ENCODE measurements at regions of chr10 and their contacts with region 1.

Region 1: DNA sequence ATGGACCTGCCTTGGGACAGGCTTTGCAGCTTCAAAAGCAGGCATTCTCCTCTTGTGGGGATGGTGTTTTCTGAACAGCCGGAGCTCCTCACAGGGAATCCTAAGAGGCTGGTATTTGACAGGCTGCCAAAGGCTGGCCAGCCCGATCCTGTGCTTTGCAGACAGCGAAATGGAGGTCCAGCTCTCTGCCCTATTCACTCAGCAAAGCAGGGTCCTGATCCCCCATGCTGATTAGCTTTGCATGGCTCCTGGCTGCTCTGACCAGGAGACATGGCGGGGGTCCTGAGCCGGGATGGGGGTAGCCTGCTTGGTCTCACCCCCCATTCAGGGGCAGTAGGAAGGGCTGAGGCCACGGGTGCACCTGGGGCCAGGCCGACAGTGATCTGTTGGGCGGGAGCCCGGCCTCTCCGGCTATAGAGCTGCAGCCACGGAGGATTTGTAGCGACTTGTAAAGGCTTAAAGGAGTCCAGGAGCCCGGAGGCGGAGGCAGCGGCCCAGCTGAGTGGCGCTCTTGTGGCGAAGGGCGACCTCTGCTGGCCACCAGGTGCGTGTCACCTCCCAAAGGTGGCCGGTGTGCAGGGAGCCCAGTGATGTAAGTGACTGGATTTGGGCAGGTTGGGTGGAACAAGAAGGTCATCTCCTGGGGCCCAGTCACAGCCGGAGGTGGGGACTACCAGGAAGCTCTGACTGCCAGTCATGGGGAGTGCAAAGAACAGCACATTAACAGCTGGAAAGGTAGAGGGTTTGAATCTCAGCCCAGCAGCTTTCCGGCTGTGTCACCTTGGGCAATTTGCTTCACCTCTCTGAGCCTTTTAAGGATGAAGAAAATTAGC is 126.5 kb downstream of the ZMIZ1 start:
- DNase-seq: no peak
- ATAC-seq: peak; percentile 94
- H3K4me3 ChIP-seq: no peak overlapping the region
- H3K27ac ChIP-seq: no peak overlapping the region
- H3K4me1 ChIP-seq: no peaks in the 10 kb centered on the region
- H3K27me3 ChIP-seq: no peaks in the 10 kb centered on the region
- CTCF ChIP-seq: peak; percentile 88 to 97 (median 92)
- EP300 ChIP-seq: no peak
- POLR2A ChIP-seq: no peak
- RAD21 ChIP-seq: peak; percentile 91

Region 2: DNA sequence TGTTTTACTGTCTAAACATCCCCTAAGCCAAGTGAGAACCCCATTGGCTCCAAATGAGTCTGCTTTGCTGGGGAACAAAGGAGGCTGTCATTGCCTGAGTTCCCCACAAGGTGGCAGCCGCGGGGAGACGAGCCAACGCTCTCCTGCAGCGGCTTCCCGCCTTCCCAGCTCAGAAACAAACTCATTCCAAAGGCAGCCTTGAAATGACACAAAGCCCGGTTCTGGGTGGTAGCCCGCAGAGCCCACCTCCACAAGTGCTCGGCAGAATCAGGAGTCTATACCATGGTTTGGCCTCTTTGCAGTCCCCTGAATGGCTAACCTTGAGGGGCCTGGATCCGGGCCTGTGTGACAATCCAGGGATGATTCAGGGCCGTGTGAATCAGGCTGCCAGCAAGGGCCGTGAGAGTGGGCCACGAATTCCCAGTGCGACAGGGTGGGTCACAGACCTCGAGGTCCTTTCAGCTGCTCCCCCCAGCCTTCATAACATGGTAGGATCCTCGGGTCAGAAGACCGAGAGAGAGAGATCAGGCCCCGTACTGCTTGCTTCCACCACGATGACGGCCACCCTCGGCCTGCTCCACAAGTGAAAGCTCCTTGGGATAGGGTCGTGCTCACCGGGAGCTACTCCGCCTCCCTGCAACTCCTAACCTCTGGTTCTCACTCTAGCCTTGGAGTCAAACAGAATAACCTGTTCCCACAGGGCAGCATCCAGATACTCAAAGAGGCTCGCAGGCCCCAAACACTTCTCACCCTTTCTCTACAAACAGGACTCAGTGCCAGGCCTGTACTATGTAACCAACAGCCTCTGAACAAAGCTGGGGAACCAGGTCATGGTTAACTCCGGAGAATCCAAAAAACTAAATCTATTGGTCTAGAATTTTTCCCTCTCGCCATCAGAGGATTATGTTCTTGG is 1348.3 kb before region 1 on chr10:
- CTCF ChIA-PET with region 1: interaction called, 3 read pairs
- POLR2A ChIA-PET with region 1: no interaction called
- RAD21 ChIA-PET with region 1: interaction called, 7 read pairs
- SMC1A ChIA-PET with region 1: no interaction called
- in situ Hi-C with region 1: no loop called
- intact Hi-C with region 1: loop called (anchors 5 kb)
- DNase-seq: no peak
- ATAC-seq: peak; percentile 91
- H3K4me3 ChIP-seq: no peak overlapping the region
- H3K27ac ChIP-seq: no peak overlapping the region
- H3K4me1 ChIP-seq: peaks cover 9% of the 10 kb centered on the region
- H3K27me3 ChIP-seq: no peaks in the 10 kb centered on the region
- CTCF ChIP-seq: peak; percentile 93 to 96 (median 95)
- EP300 ChIP-seq: no peak
- POLR2A ChIP-seq: no peak
- RAD21 ChIP-seq: peak; percentile 76

Region 3: GRCh38 chr10:78211561-78212051 is 983.7 kb before region 1 on chr10:
- CTCF ChIA-PET with region 1: interaction called, 4 read pairs
- POLR2A ChIA-PET with region 1: no interaction called
- RAD21 ChIA-PET with region 1: no interaction called
- SMC1A ChIA-PET with region 1: no interaction called
- in situ Hi-C with region 1: no loop called
- intact Hi-C with region 1: loop called (anchors 5 kb)
- DNase-seq: no peak
- ATAC-seq: no peak
- H3K4me3 ChIP-seq: no peak overlapping the region
- H3K27ac ChIP-seq: no peak overlapping the region
- H3K4me1 ChIP-seq: 0 out of 2 replicates have a peak, but pooled peaks cover 5% of the 10 kb centered on the region
- H3K27me3 ChIP-seq: peaks cover 0 to 1% of the 10 kb centered on the region in 2 experiments; a peak in 3 of 4 replicates
- CTCF ChIP-seq: peak in 2 of 3 experiments; percentile 24 to 41; a peak in 3 of 6 replicates
- EP300 ChIP-seq: no peak
- POLR2A ChIP-seq: no peak
- RAD21 ChIP-seq: peak; percentile 42

Region 4: DNA sequence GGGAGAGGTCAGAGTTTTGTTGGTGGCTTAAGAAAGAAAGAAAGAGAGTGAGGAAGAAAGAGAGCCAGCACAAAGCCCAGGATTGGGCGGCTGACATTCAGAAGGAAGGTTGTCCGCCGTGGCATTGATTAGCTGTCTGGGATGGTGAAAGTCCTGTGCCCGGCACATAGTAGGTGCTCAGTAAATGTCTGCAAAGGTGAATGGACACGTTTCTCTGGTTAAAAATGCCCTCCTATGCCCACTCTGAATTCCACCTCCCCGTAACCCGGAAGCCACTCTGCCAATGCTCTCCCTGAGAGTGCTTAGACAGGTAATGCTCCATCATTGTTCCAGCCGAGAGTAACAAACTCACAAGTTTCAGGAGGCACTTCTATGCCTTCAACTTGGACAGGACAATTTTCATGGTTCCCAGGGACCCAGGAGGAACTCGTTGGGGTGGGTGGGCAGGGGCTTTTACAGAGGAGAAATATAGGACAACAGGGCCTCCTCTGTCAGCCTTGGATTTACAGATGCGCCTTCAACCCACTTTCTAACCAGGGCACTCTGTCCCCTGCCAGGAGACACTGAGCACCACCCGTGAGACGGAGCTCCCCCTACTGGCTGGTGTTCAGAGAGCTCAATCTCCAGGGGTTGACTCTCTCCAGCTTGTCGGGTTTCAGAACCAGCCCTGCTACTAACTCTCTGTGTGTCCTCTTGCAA is 538.0 kb before region 1 on chr10:
- CTCF ChIA-PET with region 1: interaction called, 20 read pairs
- POLR2A ChIA-PET with region 1: no interaction called
- RAD21 ChIA-PET with region 1: interaction called, 5 read pairs
- SMC1A ChIA-PET with region 1: interaction called, 4 read pairs
- in situ Hi-C with region 1: no loop called
- intact Hi-C with region 1: no loop called
- DNase-seq: no peak
- ATAC-seq: peak; percentile 97
- H3K4me3 ChIP-seq: no peak overlapping the region
- H3K27ac ChIP-seq: no peak overlapping the region
- H3K4me1 ChIP-seq: peaks cover 8% of the 10 kb centered on the region
- H3K27me3 ChIP-seq: no peaks in the 10 kb centered on the region
- CTCF ChIP-seq: peak; percentile 75 to 88 (median 79)
- EP300 ChIP-seq: no peak
- POLR2A ChIP-seq: no peak
- RAD21 ChIP-seq: peak; percentile 60

Region 5: DNA sequence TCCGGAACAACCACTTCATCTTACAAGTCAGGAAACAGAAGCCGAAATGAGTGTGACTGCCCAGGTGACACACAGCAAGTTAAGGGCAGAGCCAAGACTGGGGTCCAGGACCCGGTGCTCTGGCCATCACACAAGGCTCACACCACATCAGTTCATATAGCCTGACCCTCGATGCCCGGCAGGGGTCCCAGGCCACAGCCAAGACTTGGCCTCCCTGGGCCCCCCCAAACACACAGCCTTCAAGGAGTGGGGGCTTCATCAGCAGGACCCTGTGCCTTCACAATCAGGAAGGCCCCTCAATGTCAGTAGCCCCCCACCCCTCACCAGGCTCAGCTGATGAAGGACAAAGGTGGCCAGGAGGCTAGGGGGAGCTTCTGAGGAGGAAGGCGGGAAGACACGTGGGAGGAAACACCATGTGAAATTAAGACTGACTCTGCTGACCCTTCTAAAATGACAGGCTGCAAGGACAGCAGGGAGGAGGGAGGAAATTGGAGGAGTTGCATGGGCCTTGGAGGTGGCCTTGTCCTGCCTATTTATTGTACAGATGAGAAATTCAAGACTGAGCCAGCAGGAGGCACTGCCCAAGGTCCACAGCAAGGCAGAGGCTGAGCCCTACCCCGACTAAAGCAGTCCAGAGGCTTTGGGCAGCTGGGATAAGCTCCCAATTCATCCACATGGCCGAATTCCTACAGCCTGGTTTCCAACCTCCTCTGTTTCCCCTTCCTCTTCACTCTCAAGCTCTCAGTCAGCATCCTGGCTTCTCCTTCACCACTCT is 342.7 kb before region 1 on chr10:
- CTCF ChIA-PET with region 1: interaction called, 17 read pairs
- POLR2A ChIA-PET with region 1: no interaction called
- RAD21 ChIA-PET with region 1: no interaction called
- SMC1A ChIA-PET with region 1: no interaction called
- in situ Hi-C with region 1: no loop called
- intact Hi-C with region 1: loop called (anchors 2 kb)
- DNase-seq: no peak
- ATAC-seq: 0 out of 3 replicates have a peak, but pooled peaks have one; percentile 37
- H3K4me3 ChIP-seq: no peak overlapping the region
- H3K27ac ChIP-seq: no peak overlapping the region
- H3K4me1 ChIP-seq: no peaks in the 10 kb centered on the region
- H3K27me3 ChIP-seq: peaks cover 0 to 2% of the 10 kb centered on the region in 2 experiments; a peak in 2 of 4 replicates
- CTCF ChIP-seq: peak in 2 of 3 experiments; percentile 19 to 30; a peak in 2 of 6 replicates
- EP300 ChIP-seq: no peak
- POLR2A ChIP-seq: no peak
- RAD21 ChIP-seq: 0 out of 2 replicates have a peak, but pooled peaks have one; percentile 23

Region 6: GRCh38 chr10:78972947-78973900 is 222.1 kb before region 1 on chr10:
- CTCF ChIA-PET with region 1: interaction called, 4 read pairs
- POLR2A ChIA-PET with region 1: no interaction called
- RAD21 ChIA-PET with region 1: no interaction called
- SMC1A ChIA-PET with region 1: no interaction called
- in situ Hi-C with region 1: no loop called
- intact Hi-C with region 1: loop called (anchors 10 kb)
- DNase-seq: peak; percentile 43
- ATAC-seq: peak; percentile 84
- H3K4me3 ChIP-seq: peak overlapping the region; percentile 68; the same call in 1 of the 2 replicates
- H3K27ac ChIP-seq: no peak overlapping the region
- H3K4me1 ChIP-seq: peaks cover 4% of the 10 kb centered on the region
- H3K27me3 ChIP-seq: no peaks in the 10 kb centered on the region; a peak in 1 of 4 replicates
- CTCF ChIP-seq: no peak
- EP300 ChIP-seq: no peak
- POLR2A ChIP-seq: peak; percentile 59; the same call in 1 of the 2 replicates
- RAD21 ChIP-seq: no peak